ENCODE measurements at regions of chr1 and their contacts with region 1.

Region 1: GRCh38 chr1:222897527-222898190 is 82.8 kb downstream of the DISP1 start:
- DNase-seq: no peak
- H3K4me3 Mint-ChIP-seq: peak overlapping the region; percentile 53
- H3K27ac Mint-ChIP-seq: peak overlapping the region; percentile 56
- H3K4me1 Mint-ChIP-seq: peaks cover 23% of the 10 kb centered on the region
- H3K27me3 Mint-ChIP-seq: no peaks in the 10 kb centered on the region

Region 2: DNA sequence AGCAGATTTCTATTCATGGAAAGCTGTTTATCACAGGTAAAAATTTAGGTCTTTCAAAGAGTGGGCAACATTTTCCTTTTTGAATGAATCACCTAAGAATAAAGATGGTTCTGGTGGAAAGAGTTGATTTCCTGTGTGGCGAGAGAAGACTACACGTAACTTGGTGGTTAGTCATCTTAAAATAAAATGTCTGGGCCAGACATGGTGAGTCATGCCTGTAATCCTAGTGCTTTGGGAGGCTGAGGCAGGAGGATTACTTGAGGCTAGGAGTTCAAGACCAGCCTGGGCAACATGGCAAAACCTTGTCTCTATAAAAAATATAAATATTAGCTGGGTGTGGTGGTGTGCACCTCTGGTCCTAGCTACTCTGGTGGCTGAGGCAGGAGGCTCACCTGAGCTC is 17.1 kb before region 1 on chr1:
- CTCF ChIA-PET with region 1: no interaction called
- intact Hi-C with region 1: loop called (anchors 1 kb)
- DNase-seq: peak; percentile 52
- H3K4me3 Mint-ChIP-seq: no peak overlapping the region
- H3K27ac Mint-ChIP-seq: peak overlapping the region; percentile 53
- H3K4me1 Mint-ChIP-seq: peaks cover 23% of the 10 kb centered on the region
- H3K27me3 Mint-ChIP-seq: no peaks in the 10 kb centered on the region